GM13976 (cell line): ENCODE measurements at regions of chr20 and their contacts with region 1.

Region 1: GRCh38 chr20:20860078-20860806 is 147.8 kb upstream of the RALGAPA2 start:
- DNase-seq: peak; percentile 76
- CTCF ChIP-seq: peak; percentile 89

Region 2: GRCh38 chr20:20969701-20970280 is 109.5 kb after region 1 on chr20:
- in situ Hi-C with region 1: no loop called
- DNase-seq: no peak
- CTCF ChIP-seq: no peak

Region 3: GRCh38 chr20:21235484-21236445 is 375.5 kb after region 1 on chr20:
- in situ Hi-C with region 1: loop called (anchors 25 kb)
- DNase-seq: peak; percentile 72
- CTCF ChIP-seq: peak; percentile 94